ENCODE measurements at regions of chr11 and their contacts with region 1.

Region 1: DNA sequence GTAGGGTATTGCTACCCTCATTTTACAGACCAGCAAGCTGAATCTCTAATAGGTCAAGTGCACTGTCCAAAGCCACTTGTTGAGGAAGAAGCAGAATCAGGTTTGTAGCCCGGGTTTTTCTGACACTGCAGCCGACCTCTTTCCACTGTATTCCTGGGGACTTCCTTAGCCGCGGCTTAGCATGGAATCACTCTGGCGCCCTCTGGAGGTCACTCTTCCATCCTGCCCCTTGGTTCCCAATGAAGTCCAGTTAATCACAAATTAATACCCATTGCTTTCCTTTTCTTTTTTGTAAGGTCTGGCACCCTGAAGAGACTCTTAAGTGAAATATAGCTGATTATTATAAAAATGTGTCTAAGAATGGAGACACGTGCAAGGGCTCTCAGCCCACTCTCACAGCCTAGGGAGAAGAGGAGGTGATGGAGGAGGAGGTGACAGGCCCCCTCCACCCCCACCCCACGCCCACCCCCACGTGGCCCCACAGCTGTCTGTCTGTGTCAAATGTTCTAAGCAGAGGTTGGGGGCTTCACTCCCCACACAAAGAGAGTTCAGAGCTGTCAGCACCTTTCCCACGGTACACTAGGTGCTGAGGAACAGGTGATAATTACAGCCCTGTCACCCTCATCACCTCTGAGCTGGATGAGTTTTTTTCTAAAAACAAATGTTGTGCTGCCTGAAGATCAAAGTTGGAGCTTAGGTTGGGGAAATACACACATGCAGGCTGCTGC is 57.7 kb upstream of the DRD2 start:
- DNase-seq: peak in 30 of 35 experiments; percentile 6 to 72 (median 33)
- ATAC-seq: no peak
- H3K4me3 ChIP-seq: no peak overlapping the region
- H3K4me3 Mint-ChIP-seq: no peak overlapping the region
- H3K27ac ChIP-seq: no peak overlapping the region
- H3K27ac Mint-ChIP-seq: no peak overlapping the region
- H3K4me1 ChIP-seq: no peaks in the 10 kb centered on the region
- H3K4me1 Mint-ChIP-seq: peaks cover 0 to 5% (median 0%) of the 10 kb centered on the region in 3 donors
- H3K27me3 ChIP-seq: peaks cover 0 to 15% of the 10 kb centered on the region in 2 experiments
- H3K27me3 Mint-ChIP-seq: peaks cover 22 to 31% of the 10 kb centered on the region in 2 donors

Region 2: DNA sequence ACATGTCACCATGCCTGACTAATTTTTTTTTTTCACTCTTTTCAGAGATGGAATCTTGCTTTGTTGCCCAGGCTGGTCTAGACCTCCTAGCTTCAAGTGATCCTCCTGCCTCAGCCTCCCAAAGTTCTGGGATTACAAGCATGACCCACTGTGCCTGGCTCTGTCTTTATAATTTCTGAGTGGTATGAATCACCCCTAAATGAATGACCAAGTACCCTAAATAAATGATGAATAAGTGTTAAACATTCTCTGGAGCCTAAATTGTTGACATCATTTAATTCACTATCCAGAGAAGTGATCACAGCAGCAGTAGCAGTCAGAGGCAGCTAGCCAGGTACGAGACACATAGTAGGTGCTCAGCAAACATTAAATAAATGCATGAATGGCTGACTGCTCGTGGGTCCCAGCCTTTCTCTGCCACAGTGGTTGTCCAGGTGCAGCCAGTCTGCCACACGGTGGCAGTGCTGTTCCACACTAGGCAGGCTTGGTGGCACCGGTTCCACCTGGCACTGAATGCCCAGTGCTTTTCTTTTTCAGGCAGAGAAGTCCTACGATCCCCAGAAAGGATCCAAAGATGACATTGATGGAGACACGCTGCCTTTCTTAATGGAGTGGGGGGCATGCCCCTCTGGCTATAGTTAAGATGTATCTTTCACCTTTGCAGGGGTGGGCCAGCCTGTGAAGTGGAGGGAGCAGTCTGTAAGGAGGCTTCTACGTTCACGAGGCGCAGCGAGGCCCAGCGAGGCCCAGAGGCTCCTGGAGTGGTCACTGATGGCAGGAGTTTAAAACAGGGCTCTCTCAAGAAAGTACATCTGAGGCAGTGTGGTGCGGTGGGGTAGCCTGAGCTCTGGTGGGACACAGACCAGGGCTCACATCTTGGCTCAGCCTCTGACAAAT is 227.2 kb before region 1 on chr11:
- CTCF ChIA-PET with region 1: interaction called, 8 to 17 read pairs
- POLR2A ChIA-PET with region 1: no interaction called
- DNase-seq: peak; percentile 28 to 81 (median 60)
- ATAC-seq: peak; percentile 73 to 93 (median 84)
- H3K4me3 ChIP-seq: no peak overlapping the region
- H3K4me3 Mint-ChIP-seq: no peak overlapping the region
- H3K27ac ChIP-seq: no peak overlapping the region
- H3K27ac Mint-ChIP-seq: no peak overlapping the region
- H3K4me1 ChIP-seq: no peaks in the 10 kb centered on the region
- H3K4me1 Mint-ChIP-seq: peaks cover 0 to 11% (median 0%) of the 10 kb centered on the region in 3 donors
- H3K27me3 ChIP-seq: peaks cover 0 to 5% of the 10 kb centered on the region in 2 experiments
- H3K27me3 Mint-ChIP-seq: peaks cover 3 to 4% of the 10 kb centered on the region in 2 donors

Measured in T-cell (primary cell).